Naive thymus-derived CD8-positive, alpha-beta T cell (primary cell): ENCODE measurements at regions of chr7 and their contacts with region 1.

Region 1: DNA sequence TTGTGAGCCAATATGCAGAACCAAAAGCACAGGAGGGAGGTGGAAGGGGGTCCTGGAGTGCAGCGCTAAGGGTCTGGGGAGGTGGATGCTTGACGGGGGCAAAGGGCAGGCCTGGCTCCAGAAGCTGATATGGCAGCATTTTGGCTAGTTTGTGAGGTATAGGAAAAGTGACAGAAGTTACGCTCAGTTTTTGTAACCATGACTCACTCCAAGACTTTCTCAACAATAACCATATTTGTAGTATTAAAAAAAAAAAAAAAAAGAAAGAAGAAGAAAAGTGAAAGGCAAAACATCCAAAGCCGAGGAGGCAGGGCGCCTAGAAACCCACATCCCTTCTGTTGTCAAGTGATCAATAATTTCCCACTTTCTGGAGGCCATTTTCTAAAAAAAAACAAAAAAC is 92.3 kb downstream of the RNF216 start:
- DNase-seq: peak; percentile 22 to 80 (median 54)
- ATAC-seq: peak; percentile 36 to 54
- H3K4me3 Mint-ChIP-seq: peak overlapping the region; percentile 46 to 87 (median 74)
- H3K27ac Mint-ChIP-seq: peak overlapping the region; percentile 93 to 98 (median 96)
- H3K4me1 Mint-ChIP-seq: peaks cover 46 to 96% (median 93%) of the 10 kb centered on the region in 4 donors
- H3K27me3 Mint-ChIP-seq: no peaks in the 10 kb centered on the region

Region 2: DNA sequence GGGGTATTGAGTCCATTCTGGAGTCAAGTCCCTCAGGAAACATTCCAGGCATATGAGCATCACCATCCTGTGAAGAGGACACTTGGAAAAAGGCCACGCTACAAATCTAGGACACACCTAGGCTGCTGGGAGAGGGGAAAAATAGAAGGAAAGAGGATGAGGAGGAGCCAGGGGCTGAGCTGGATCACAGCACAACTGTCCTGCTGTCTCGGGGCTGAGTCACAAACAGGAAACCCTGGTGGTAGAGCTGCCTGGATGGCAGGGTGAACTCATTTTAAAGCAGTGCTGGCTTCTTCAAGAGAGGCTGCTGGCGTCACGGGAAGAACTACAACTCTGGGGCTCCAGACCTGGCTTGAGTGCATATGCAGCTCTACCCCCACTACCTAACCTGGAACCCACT is 59.2 kb before region 1 on chr7:
- POLR2A ChIA-PET with region 1: no interaction called
- DNase-seq: peak in 6 of 10 donors; percentile 12 to 43 (median 32)
- ATAC-seq: peak; percentile 76 to 80
- H3K4me3 Mint-ChIP-seq: peak overlapping the region in 6 of 10 donors; percentile 1 to 53 (median 28)
- H3K27ac Mint-ChIP-seq: peak overlapping the region; percentile 74 to 96 (median 88)
- H3K4me1 Mint-ChIP-seq: peaks cover 24 to 52% (median 48%) of the 10 kb centered on the region in 4 donors
- H3K27me3 Mint-ChIP-seq: no peaks in the 10 kb centered on the region

Region 3: GRCh38 chr7:5677538-5678294 is 11.4 kb before region 1 on chr7:
- POLR2A ChIA-PET with region 1: interaction called, 13 read pairs
- DNase-seq: peak in 4 of 10 donors; percentile 25 to 48 (median 34)
- ATAC-seq: peak; percentile 60 to 72
- H3K4me3 Mint-ChIP-seq: no peak overlapping the region
- H3K27ac Mint-ChIP-seq: peak overlapping the region; percentile 45 to 87 (median 66)
- H3K4me1 Mint-ChIP-seq: peaks cover 34 to 76% (median 66%) of the 10 kb centered on the region in 4 donors
- H3K27me3 Mint-ChIP-seq: no peaks in the 10 kb centered on the region

Region 4: GRCh38 chr7:5704534-5704922 is 15.4 kb after region 1 on chr7:
- POLR2A ChIA-PET with region 1: interaction called, 20 read pairs
- DNase-seq: peak; percentile 44 to 86 (median 74)
- ATAC-seq: no peak
- H3K4me3 Mint-ChIP-seq: no peak overlapping the region
- H3K27ac Mint-ChIP-seq: peak overlapping the region in 2 of 10 donors; percentile 26 to 28
- H3K4me1 Mint-ChIP-seq: peaks cover 21 to 41% (median 32%) of the 10 kb centered on the region in 4 donors
- H3K27me3 Mint-ChIP-seq: no peaks in the 10 kb centered on the region